ENCODE measurements at regions of chr6 and their contacts with region 1.

Region 1: GRCh38 chr6:157873735-157874344 is 50.8 kb downstream of the SNX9 start:
- DNase-seq: peak; percentile 50
- ATAC-seq: peak; percentile 98
- H3K4me3 ChIP-seq: no peak overlapping the region
- H3K27ac ChIP-seq: no peak overlapping the region
- H3K4me1 ChIP-seq: no peaks in the 10 kb centered on the region
- H3K27me3 ChIP-seq: no peaks in the 10 kb centered on the region
- CTCF ChIP-seq: peak; percentile 88 to 92 (median 89); a peak in 5 of 6 replicates
- POLR2A ChIP-seq: no peak
- RAD21 ChIP-seq: peak; percentile 95

Region 2: DNA sequence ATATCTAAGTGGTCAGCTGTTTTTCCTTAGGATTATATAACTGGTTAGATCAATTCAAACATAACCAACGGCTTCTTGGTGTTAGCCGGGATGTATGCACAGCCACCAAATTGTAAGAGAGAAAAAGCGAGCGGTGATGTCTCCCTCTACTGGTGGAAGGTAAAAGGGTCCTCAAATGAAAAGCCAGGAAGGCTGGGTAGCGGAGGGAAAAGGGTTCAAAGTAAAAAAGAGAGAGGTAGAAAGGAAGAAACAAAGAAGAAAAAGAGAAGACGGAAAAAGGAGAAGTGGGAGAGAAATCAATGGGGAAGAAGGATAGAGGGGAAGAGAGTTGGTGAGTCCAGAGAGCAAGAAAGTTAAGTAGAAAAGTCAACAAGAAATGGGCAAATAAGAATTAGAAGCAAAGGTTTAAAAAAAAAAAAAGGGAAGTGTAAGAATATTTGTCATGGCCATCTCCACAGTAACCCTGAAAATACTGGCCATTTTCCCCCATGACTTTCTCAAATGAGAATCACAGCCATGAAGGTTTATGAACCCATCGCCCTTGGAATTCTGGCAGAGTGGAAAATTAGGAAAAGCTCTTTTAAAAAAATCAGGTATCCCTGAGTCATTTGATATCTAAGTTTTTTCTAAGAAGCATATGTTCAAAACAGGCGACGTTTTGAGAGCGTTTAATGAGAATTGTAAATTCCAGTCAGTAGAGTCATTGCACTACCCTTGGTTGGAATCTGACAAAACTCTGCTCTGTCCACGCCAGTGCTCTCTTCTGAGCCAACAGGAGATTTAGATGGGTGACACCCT is 206.4 kb before region 1 on chr6:
- CTCF ChIA-PET with region 1: interaction called, 6 read pairs
- POLR2A ChIA-PET with region 1: no interaction called
- RAD21 ChIA-PET with region 1: no interaction called
- intact Hi-C with region 1: loop called (anchors 10 kb)
- DNase-seq: peak; percentile 53
- ATAC-seq: peak; percentile 87
- H3K4me3 ChIP-seq: no peak overlapping the region
- H3K27ac ChIP-seq: no peak overlapping the region
- H3K4me1 ChIP-seq: no peaks in the 10 kb centered on the region; a peak in 1 of 4 replicates
- H3K27me3 ChIP-seq: no peaks in the 10 kb centered on the region
- CTCF ChIP-seq: peak; percentile 85 to 95 (median 93)
- POLR2A ChIP-seq: no peak
- RAD21 ChIP-seq: peak; percentile 90

Region 3: DNA sequence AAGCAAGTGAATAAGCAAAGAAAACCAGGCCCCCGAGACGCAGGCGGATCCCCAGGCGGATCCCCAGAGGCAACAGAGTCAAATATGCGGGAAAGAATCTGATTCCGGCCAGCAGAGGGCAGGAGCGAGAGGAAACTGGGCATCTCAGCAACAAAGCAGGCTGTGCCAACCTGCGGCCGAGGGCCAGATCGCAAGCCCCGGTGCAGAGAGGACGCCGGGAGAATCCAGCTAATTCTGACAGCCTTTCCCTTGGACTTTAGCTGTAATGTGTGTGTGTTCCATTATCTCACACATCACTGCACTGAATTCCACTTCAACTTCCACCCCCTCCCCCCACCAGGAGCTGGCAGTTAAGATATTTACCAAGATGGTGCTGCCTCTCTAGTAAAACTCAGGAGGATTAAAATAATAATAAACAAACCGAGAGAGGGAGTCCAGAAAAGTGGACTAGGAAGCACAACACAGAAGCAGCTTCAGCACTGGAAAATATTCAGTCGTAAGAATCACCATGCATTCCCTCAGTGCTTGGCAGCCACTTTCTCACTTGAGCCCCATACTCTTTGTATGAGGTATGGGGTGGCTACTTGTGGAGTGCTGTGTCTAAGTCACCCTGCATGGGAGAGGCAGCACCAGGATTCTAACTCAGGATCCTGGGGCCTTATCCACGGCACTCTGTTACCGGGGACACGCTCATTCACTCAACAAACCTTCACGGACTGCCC is 117.0 kb before region 1 on chr6:
- CTCF ChIA-PET with region 1: interaction called, 31 read pairs
- POLR2A ChIA-PET with region 1: no interaction called
- RAD21 ChIA-PET with region 1: interaction called, 6 to 9 read pairs
- intact Hi-C with region 1: loop called (anchors 1 kb)
- DNase-seq: peak; percentile 71
- ATAC-seq: peak; percentile 89
- H3K4me3 ChIP-seq: peak overlapping the region in 1 of 2 experiments; percentile 18; a peak in 1 of 4 replicates
- H3K27ac ChIP-seq: no peak overlapping the region
- H3K4me1 ChIP-seq: peaks cover 17 to 49% of the 10 kb centered on the region in 2 experiments
- H3K27me3 ChIP-seq: no peaks in the 10 kb centered on the region
- CTCF ChIP-seq: peak in 2 of 3 experiments; percentile 79 to 88; a peak in 4 of 6 replicates
- POLR2A ChIP-seq: no peak
- RAD21 ChIP-seq: no peak

Region 4: DNA sequence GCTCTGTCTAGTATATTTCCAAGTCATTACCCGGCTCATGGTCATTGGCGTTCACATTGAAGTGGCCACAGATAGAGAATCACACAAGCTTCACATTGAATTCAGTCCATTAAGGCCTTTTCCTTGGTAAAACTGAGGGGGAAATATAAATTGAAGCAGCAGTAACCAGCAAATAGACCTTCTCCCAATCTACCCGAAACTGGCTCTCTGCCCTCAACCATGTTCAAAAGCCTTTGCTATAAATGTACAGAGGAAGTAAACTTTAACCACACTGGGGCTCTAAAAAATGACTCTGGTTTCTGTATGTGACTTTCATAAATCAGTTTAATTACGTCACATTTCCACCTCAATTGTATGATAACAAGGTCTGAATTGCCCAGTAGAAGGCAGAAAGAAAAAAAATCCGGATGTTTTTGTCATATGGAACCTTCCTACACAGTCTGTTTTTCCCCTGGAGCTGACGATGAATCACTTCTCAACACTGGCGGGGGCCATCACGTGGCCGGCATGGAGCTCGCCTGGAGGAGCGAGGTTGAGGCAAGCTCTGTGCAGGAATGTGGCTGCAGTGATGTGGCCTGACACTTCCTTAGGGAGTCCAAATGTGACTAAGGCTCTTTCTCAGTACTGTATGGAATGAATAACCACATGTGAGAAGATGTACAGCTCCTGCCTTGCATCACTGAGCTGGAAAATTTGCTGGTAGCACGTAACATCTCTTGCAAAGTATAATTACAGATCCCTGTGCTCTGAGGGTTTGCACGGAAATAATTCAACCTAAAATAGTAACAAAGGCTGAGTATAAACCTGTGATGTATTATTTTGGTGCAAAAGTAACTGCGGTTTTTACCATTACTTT is 109.4 kb before region 1 on chr6:
- CTCF ChIA-PET with region 1: interaction called, 31 read pairs
- POLR2A ChIA-PET with region 1: no interaction called
- RAD21 ChIA-PET with region 1: interaction called, 3 to 4 read pairs
- intact Hi-C with region 1: no loop called
- DNase-seq: peak; percentile 91
- ATAC-seq: peak; percentile 75
- H3K4me3 ChIP-seq: peak overlapping the region in 1 of 2 experiments; percentile 17; a peak in 2 of 4 replicates
- H3K27ac ChIP-seq: peak overlapping the region; percentile 43
- H3K4me1 ChIP-seq: peaks cover 48 to 63% of the 10 kb centered on the region in 2 experiments
- H3K27me3 ChIP-seq: no peaks in the 10 kb centered on the region
- CTCF ChIP-seq: no peak
- POLR2A ChIP-seq: no peak
- RAD21 ChIP-seq: no peak

Region 5: GRCh38 chr6:157800420-157801237 is 73.2 kb before region 1 on chr6:
- CTCF ChIA-PET with region 1: no interaction called
- POLR2A ChIA-PET with region 1: no interaction called
- RAD21 ChIA-PET with region 1: no interaction called
- intact Hi-C with region 1: no loop called
- DNase-seq: no peak
- ATAC-seq: no peak
- H3K4me3 ChIP-seq: no peak overlapping the region
- H3K27ac ChIP-seq: no peak overlapping the region
- H3K4me1 ChIP-seq: peaks cover 2 to 14% of the 10 kb centered on the region in 2 experiments; a peak in 2 of 4 replicates
- H3K27me3 ChIP-seq: no peaks in the 10 kb centered on the region
- CTCF ChIP-seq: no peak
- POLR2A ChIP-seq: no peak
- RAD21 ChIP-seq: no peak

Region 6: GRCh38 chr6:157823001-157823527 is 50.8 kb before region 1 on chr6 and contains the start of gene SNX9:
- CTCF ChIA-PET with region 1: no interaction called
- POLR2A ChIA-PET with region 1: no interaction called
- RAD21 ChIA-PET with region 1: no interaction called
- intact Hi-C with region 1: loop called (anchors 5 kb)
- DNase-seq: peak; percentile 29
- ATAC-seq: peak; percentile 82
- H3K4me3 ChIP-seq: peak within 1 kb of the TSS; percentile 71 to 80
- H3K27ac ChIP-seq: peak within 1 kb of the TSS; percentile 88
- H3K4me1 ChIP-seq: peaks cover 15 to 24% of the 10 kb centered on the region in 2 experiments; a peak in 3 of 4 replicates
- H3K27me3 ChIP-seq: no peaks in the 10 kb centered on the region
- CTCF ChIP-seq: no peak
- POLR2A ChIP-seq: no peak
- RAD21 ChIP-seq: no peak
- total RNA-seq, gene SNX9: 42.5 TPM

Region 7: GRCh38 chr6:157862706-157863105 is 11.1 kb before region 1 on chr6:
- CTCF ChIA-PET with region 1: interaction called, 10 read pairs
- POLR2A ChIA-PET with region 1: no interaction called
- RAD21 ChIA-PET with region 1: no interaction called
- intact Hi-C with region 1: no loop called
- DNase-seq: no peak
- ATAC-seq: no peak
- H3K4me3 ChIP-seq: no peak overlapping the region
- H3K27ac ChIP-seq: no peak overlapping the region
- H3K4me1 ChIP-seq: peaks cover 7 to 19% of the 10 kb centered on the region in 2 experiments
- H3K27me3 ChIP-seq: no peaks in the 10 kb centered on the region
- CTCF ChIP-seq: no peak
- POLR2A ChIP-seq: no peak
- RAD21 ChIP-seq: no peak

Region 8: GRCh38 chr6:158057213-158057987 is 183.6 kb after region 1 on chr6:
- CTCF ChIA-PET with region 1: no interaction called
- POLR2A ChIA-PET with region 1: no interaction called
- RAD21 ChIA-PET with region 1: no interaction called
- intact Hi-C with region 1: no loop called
- DNase-seq: peak; percentile 90
- ATAC-seq: peak; percentile 74
- H3K4me3 ChIP-seq: peak overlapping the region in 1 of 2 experiments; percentile 7; a peak in 2 of 4 replicates
- H3K27ac ChIP-seq: peak overlapping the region; percentile 71
- H3K4me1 ChIP-seq: peaks cover 45 to 64% of the 10 kb centered on the region in 2 experiments
- H3K27me3 ChIP-seq: no peaks in the 10 kb centered on the region
- CTCF ChIP-seq: no peak
- POLR2A ChIP-seq: no peak
- RAD21 ChIP-seq: peak; percentile 37; the same call in 1 of the 2 replicates

Measured in HCT116 (cell line).